ENCODE measurements at regions of chr17 and their contacts with region 1.

Region 1: DNA sequence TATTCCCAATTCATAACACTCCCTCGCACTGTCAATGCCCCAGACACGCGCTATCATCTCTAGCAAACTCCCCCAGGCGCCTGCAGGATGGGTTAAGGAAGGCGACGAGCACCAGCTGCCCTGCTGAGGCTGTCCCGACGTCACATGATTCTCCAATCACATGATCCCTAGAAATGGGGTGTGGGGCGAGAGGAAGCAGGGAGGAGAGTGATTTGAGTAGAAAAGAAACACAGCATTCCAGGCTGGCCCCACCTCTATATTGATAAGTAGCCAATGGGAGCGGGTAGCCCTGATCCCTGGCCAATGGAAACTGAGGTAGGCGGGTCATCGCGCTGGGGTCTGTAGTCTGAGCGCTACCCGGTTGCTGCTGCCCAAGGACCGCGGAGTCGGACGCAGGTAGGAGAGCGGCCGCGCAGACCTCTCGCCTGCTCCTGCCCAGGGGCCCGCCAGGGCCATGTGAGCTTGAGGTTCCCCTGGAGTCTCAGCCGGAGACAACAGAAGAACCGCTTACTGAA is at the start of gene GRN:
- DNase-seq: peak; percentile 84
- H3K4me3 Mint-ChIP-seq: peak within 1 kb of the TSS; percentile 93
- H3K27ac Mint-ChIP-seq: peak within 1 kb of the TSS; percentile 84
- H3K4me1 Mint-ChIP-seq: peaks cover 27% of the 10 kb centered on the region
- H3K27me3 Mint-ChIP-seq: peaks cover 9% of the 10 kb centered on the region
- total RNA-seq, gene GRN: 32.7 and 42.9 TPM in 2 replicates

Region 2: GRCh38 chr17:44123356-44124117 is 221.5 kb before region 1 on chr17 and contains the start of gene HDAC5:
- intact Hi-C with region 1: loop called (anchors 5 kb)
- DNase-seq: peak; percentile 92
- H3K4me3 Mint-ChIP-seq: peak within 1 kb of the TSS; percentile 91
- H3K27ac Mint-ChIP-seq: peak within 1 kb of the TSS; percentile 96
- H3K4me1 Mint-ChIP-seq: peaks cover 25% of the 10 kb centered on the region
- H3K27me3 Mint-ChIP-seq: peaks cover 12% of the 10 kb centered on the region
- total RNA-seq, gene HDAC5: 20.6 and 22.8 TPM in 2 replicates

Region 3: GRCh38 chr17:44308320-44308818 is 36.6 kb before region 1 on chr17 and contains the start of gene RUNDC3A:
- intact Hi-C with region 1: loop called (anchors 1 kb)
- DNase-seq: peak; percentile 79
- H3K4me3 Mint-ChIP-seq: peak within 1 kb of the TSS; percentile 57
- H3K27ac Mint-ChIP-seq: no peak within 1 kb of the TSS
- H3K4me1 Mint-ChIP-seq: no peaks in the 10 kb centered on the region
- H3K27me3 Mint-ChIP-seq: peaks cover 28% of the 10 kb centered on the region
- total RNA-seq, gene RUNDC3A: 0.13 and 0.22 TPM in 2 replicates

Region 4: GRCh38 chr17:44331249-44331760 is 13.7 kb before region 1 on chr17:
- intact Hi-C with region 1: loop called (anchors 1 kb)
- DNase-seq: peak; percentile 65
- H3K4me3 Mint-ChIP-seq: no peak overlapping the region
- H3K27ac Mint-ChIP-seq: no peak overlapping the region
- H3K4me1 Mint-ChIP-seq: peaks cover 12% of the 10 kb centered on the region
- H3K27me3 Mint-ChIP-seq: no peaks in the 10 kb centered on the region

Region 5: GRCh38 chr17:44385287-44386181 is 40.5 kb after region 1 on chr17:
- intact Hi-C with region 1: loop called (anchors 1 kb)
- DNase-seq: peak; percentile 79
- H3K4me3 Mint-ChIP-seq: peak overlapping the region; percentile 73
- H3K27ac Mint-ChIP-seq: no peak overlapping the region
- H3K4me1 Mint-ChIP-seq: peaks cover 6% of the 10 kb centered on the region
- H3K27me3 Mint-ChIP-seq: peaks cover 24% of the 10 kb centered on the region

Region 6: GRCh38 chr17:44786551-44787081 is 441.6 kb after region 1 on chr17:
- intact Hi-C with region 1: no loop called
- DNase-seq: no peak
- H3K4me3 Mint-ChIP-seq: no peak overlapping the region
- H3K27ac Mint-ChIP-seq: no peak overlapping the region
- H3K4me1 Mint-ChIP-seq: no peaks in the 10 kb centered on the region
- H3K27me3 Mint-ChIP-seq: peaks cover 7% of the 10 kb centered on the region